GM10248 (cell line): ENCODE measurements at regions of chr19 and their contacts with region 1.

Region 1: DNA sequence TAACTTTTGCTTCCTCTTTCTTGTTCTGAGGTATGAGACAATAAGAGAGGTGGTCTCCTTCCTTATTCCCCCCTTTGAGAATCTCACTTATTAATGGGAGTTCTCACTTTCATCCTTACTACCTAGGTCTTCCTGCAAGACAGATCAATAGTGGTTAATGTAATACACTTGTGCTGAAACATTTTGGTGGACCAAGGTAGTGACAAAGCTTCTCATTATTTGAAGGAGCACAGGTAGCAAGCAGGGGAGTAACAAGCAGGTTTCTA is 17.9 kb downstream of the ZNF700 start:
- DNase-seq: no peak
- CTCF ChIP-seq: no peak

Region 2: GRCh38 chr19:11931051-11931450 is 11.7 kb before region 1 on chr19:
- CTCF ChIA-PET with region 1: no interaction called
- POLR2A ChIA-PET with region 1: no interaction called
- DNase-seq: no peak
- CTCF ChIP-seq: no peak

Region 3: GRCh38 chr19:11964858-11965645 is 22.3 kb after region 1 on chr19 and contains the start of gene ZNF763:
- CTCF ChIA-PET with region 1: interaction called, 11 read pairs
- POLR2A ChIA-PET with region 1: no interaction called
- DNase-seq: peak; percentile 92
- CTCF ChIP-seq: no peak